ENCODE measurements at regions of chr10 and their contacts with region 1.

Region 1: GRCh38 chr10:76051007-76051936 is 619.8 kb downstream of the LRMDA start:
- DNase-seq: peak; percentile 100
- ATAC-seq: peak; percentile 97
- H3K4me3 ChIP-seq: peak overlapping the region in 1 of 3 experiments; percentile 24; a peak in 1 of 6 replicates
- H3K27ac ChIP-seq: peak overlapping the region; percentile 93
- H3K4me1 ChIP-seq: peaks cover 70% of the 10 kb centered on the region
- H3K27me3 ChIP-seq: no peaks in the 10 kb centered on the region
- CTCF ChIP-seq: peak; percentile 37; the same call in 1 of the 2 replicates
- EP300 ChIP-seq: peak; percentile 99
- POLR2A ChIP-seq: peak; percentile 44 to 59
- RAD21 ChIP-seq: no peak

Region 2: DNA sequence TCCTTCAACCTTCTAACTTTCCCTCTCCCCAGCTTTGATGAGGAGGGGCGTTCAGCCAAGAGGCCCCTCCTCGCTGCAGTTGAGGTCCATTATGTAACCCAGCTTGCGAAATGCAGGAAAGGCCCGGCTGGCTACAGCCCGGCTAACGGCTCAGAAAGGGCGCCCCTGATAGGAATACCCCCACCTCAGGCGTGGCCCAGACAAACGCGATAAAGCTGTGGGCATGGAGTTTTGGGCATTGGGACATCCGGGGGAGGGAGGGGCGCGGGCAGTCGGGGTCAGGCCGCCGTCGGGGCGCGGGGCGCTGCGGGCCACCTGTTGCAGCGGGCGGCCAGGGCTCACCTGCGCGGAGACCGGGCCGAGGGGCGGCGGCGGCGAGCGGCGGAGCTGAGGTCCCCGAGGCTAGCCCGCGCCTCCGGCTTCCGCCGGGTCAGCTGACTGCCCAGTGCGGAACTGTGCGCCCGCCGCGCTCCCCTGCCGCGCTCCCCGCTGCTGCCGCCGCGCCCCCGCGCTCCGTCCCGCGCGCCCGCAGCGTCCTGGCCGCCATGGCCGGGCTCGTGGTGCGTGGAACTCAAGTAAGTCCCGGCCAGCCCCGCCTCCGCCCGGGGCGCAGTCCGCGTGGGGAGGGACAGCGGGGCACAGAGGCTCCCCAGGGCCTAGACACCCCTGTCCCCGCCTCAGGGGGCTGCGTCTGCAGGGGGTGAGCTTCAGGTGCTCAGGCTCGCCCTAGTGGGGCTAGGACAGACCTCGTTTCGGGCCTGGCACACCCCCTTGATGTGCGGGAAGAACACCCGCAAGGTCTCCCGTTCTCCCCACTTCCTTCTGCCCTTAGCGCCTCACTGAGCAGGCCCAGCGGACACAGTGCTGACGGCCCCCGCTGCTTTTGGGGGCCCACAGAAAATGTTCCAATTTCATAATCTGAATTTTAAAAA is 619.8 kb before region 1 on chr10 and contains the start of gene LRMDA:
- CTCF ChIA-PET with region 1: no interaction called
- POLR2A ChIA-PET with region 1: interaction called, 16 read pairs
- in situ Hi-C with region 1: no loop called
- intact Hi-C with region 1: no loop called
- DNase-seq: peak; percentile 83
- ATAC-seq: peak; percentile 73
- H3K4me3 ChIP-seq: peak within 1 kb of the TSS; percentile 77 to 95 (median 79)
- H3K27ac ChIP-seq: peak within 1 kb of the TSS; percentile 92
- H3K4me1 ChIP-seq: peaks cover 84% of the 10 kb centered on the region
- H3K27me3 ChIP-seq: no peaks in the 10 kb centered on the region
- CTCF ChIP-seq: peak; percentile 20; the same call in 1 of the 2 replicates
- EP300 ChIP-seq: peak; percentile 4 to 70; a peak in 2 of 4 replicates
- POLR2A ChIP-seq: peak in 1 of 2 experiments; percentile 14; a peak in 2 of 4 replicates
- RAD21 ChIP-seq: peak; percentile 66; the same call in 1 of the 2 replicates
- total RNA-seq, gene LRMDA: 19.3 and 22.0 TPM in 2 replicates

Region 3: GRCh38 chr10:75788394-75789205 is 262.7 kb before region 1 on chr10:
- CTCF ChIA-PET with region 1: no interaction called
- POLR2A ChIA-PET with region 1: interaction called, 19 read pairs
- in situ Hi-C with region 1: no loop called
- intact Hi-C with region 1: loop called (anchors 2 kb)
- DNase-seq: peak; percentile 94
- ATAC-seq: peak; percentile 88
- H3K4me3 ChIP-seq: peak overlapping the region in 2 of 3 experiments; percentile 21 to 42; a peak in 2 of 6 replicates
- H3K27ac ChIP-seq: peak overlapping the region; percentile 85
- H3K4me1 ChIP-seq: peaks cover 58% of the 10 kb centered on the region
- H3K27me3 ChIP-seq: no peaks in the 10 kb centered on the region
- CTCF ChIP-seq: no peak
- EP300 ChIP-seq: peak; percentile 45 to 87; a peak in 2 of 4 replicates
- POLR2A ChIP-seq: no peak
- RAD21 ChIP-seq: no peak; the same call in 1 of the 2 replicates

Region 4: DNA sequence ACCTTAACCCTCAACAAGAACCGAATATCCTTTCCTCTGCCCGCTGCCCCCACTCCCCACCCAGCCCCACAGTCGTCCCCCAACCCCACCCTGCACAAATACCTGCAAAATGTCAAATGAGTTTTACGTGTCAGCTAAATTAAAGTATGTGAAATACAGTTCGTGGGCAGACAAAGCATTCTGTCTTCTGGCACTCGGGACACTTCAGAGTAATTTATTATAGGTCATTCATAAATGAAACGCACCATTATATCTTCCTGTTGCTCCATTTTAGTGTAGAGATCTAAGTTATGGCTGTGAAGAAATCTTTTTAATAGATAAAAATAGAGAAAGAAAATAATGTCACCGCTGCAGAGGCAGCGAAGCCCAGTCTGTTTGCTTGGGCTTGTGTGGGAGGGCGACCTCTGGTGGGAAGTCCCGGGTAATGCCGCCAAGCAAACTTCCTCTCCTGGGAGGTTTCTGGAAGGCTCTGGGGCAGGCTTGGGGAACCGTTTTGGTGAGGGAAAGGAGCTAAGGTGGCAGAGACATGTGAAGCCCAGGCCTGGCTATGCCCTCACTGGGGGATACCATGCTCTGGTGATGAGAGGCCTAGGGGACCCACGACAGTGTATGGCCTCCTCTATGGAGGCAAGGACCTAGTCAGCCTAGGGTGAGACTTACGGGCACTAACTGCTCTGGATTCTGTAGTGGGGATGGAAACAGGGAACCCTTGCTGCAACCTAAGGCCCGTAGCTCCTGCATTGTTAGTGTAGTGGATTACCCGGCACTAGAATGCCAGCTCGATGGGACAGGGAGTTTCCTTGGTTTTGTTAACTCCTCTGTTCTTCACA is 14.9 kb before region 1 on chr10:
- CTCF ChIA-PET with region 1: no interaction called
- POLR2A ChIA-PET with region 1: interaction called, 145 read pairs
- in situ Hi-C with region 1: no loop called
- intact Hi-C with region 1: loop called (anchors 2 kb)
- DNase-seq: no peak
- ATAC-seq: 0 out of 3 replicates have a peak, but pooled peaks have one; percentile 15
- H3K4me3 ChIP-seq: no peak overlapping the region
- H3K27ac ChIP-seq: peak overlapping the region; percentile 97
- H3K4me1 ChIP-seq: peaks cover 57% of the 10 kb centered on the region
- H3K27me3 ChIP-seq: no peaks in the 10 kb centered on the region; a peak in 1 of 5 replicates
- CTCF ChIP-seq: peak; percentile 85
- EP300 ChIP-seq: no peak
- POLR2A ChIP-seq: no peak
- RAD21 ChIP-seq: peak; percentile 79

Region 5: GRCh38 chr10:76150139-76150875 is 99.0 kb after region 1 on chr10:
- CTCF ChIA-PET with region 1: no interaction called
- POLR2A ChIA-PET with region 1: interaction called, 35 read pairs
- in situ Hi-C with region 1: no loop called
- intact Hi-C with region 1: no loop called
- DNase-seq: peak; percentile 96
- ATAC-seq: peak; percentile 96
- H3K4me3 ChIP-seq: peak overlapping the region; percentile 39 to 63 (median 54); a peak in 5 of 6 replicates
- H3K27ac ChIP-seq: peak overlapping the region; percentile 97
- H3K4me1 ChIP-seq: peaks cover 45% of the 10 kb centered on the region
- H3K27me3 ChIP-seq: no peaks in the 10 kb centered on the region
- CTCF ChIP-seq: peak; percentile 23
- EP300 ChIP-seq: peak in 1 of 2 experiments; percentile 90; a peak in 2 of 4 replicates
- POLR2A ChIP-seq: peak; percentile 57 to 79
- RAD21 ChIP-seq: no peak; the same call in 1 of the 2 replicates

Measured in HepG2 (cell line).